ENCODE measurements at regions of chr17 and their contacts with region 1.

Region 1: GRCh38 chr17:67671492-67671891 is 46.2 kb upstream of the NOL11 start:
- DNase-seq: no peak

Region 2: GRCh38 chr17:67488161-67488560 is 183.3 kb before region 1 on chr17:
- in situ Hi-C with region 1: loop called (anchors 10 kb)
- DNase-seq: peak; percentile 67

Measured in G401 (cell line).